GM10248 (cell line): ENCODE measurements at regions of chr21 and their contacts with region 1.

Region 1: GRCh38 chr21:36854391-36854790 is 112.1 kb downstream of the HLCS start:
- DNase-seq: peak; percentile 44
- CTCF ChIP-seq: peak; percentile 51

Region 2: GRCh38 chr21:36867291-36867905 is 13.0 kb after region 1 on chr21:
- CTCF ChIA-PET with region 1: interaction called, 13 read pairs
- POLR2A ChIA-PET with region 1: no interaction called
- DNase-seq: no peak
- CTCF ChIP-seq: no peak

Region 3: GRCh38 chr21:36959020-36959835 is 104.8 kb after region 1 on chr21:
- CTCF ChIA-PET with region 1: no interaction called
- POLR2A ChIA-PET with region 1: no interaction called
- DNase-seq: no peak
- CTCF ChIP-seq: no peak

Region 4: GRCh38 chr21:37106998-37107397 is 252.6 kb after region 1 on chr21:
- CTCF ChIA-PET with region 1: no interaction called
- POLR2A ChIA-PET with region 1: no interaction called
- DNase-seq: no peak
- CTCF ChIP-seq: no peak